ENCODE measurements at regions of chr4 and their contacts with region 1.

Region 1: DNA sequence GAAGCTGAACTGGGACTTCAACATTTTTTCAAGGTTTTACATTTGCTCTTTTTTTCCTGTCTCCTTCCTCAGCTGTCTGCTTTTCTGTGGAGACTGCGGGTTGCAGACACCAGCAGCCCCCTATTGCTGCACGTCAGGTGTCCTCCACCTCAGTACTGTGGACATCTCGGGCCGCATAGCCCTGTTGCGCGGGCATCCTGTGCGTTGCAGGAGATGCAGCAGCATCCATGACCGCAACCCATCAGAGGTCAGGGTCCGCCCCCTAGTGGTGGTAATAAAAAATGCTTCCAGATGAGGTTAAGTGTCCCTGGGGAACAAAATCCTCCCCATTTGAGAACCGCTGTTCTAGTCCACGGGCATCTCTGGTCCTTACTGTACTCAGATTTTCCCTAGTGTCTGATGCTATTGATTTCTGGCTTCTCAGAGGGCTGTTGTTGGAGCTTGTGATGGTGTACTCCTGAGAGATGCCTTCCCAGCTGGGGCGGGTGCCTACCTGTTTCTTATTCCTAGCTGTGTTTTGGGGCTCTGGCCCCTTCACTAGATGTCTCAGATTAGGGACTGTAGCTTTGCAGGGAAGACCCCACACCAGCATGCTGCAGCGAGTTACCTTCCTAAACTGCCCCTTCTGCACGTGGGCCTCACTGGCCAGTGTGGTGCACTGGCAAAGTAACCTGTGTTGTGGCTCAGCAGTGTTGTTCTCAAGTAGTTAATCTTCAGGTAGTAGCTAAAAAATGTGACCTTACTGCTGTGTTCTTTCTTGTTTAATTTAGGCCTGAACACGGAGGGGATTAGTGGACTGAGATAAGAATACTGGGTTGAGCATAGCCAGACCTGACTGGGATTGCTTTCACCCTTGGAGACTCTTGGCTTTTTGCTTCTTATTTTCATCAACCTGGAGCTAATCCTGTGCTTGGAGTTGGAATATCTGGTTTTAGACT is 28.2 kb downstream of the NSD2 start:
- DNase-seq: peak; percentile 44
- ATAC-seq: peak; percentile 95
- H3K4me3 Mint-ChIP-seq: no peak overlapping the region
- H3K27ac Mint-ChIP-seq: no peak overlapping the region
- H3K4me1 Mint-ChIP-seq: peaks cover 6% of the 10 kb centered on the region
- H3K27me3 Mint-ChIP-seq: no peaks in the 10 kb centered on the region
- CTCF ChIP-seq: peak; percentile 67

Region 2: GRCh38 chr4:1579901-1580691 is 319.3 kb before region 1 on chr4:
- CTCF ChIA-PET with region 1: no interaction called
- POLR2A ChIA-PET with region 1: no interaction called
- intact Hi-C with region 1: no loop called
- DNase-seq: peak; percentile 89
- ATAC-seq: peak; percentile 83
- H3K4me3 Mint-ChIP-seq: peak overlapping the region; percentile 81
- H3K27ac Mint-ChIP-seq: peak overlapping the region; percentile 79
- H3K4me1 Mint-ChIP-seq: peaks cover 4% of the 10 kb centered on the region
- H3K27me3 Mint-ChIP-seq: no peaks in the 10 kb centered on the region
- CTCF ChIP-seq: no peak

Region 3: GRCh38 chr4:1746265-1746691 is 153.1 kb before region 1 on chr4:
- CTCF ChIA-PET with region 1: interaction called, 87 read pairs
- POLR2A ChIA-PET with region 1: no interaction called
- intact Hi-C with region 1: loop called (anchors 1 kb)
- DNase-seq: peak; percentile 84
- ATAC-seq: peak; percentile 95
- H3K4me3 Mint-ChIP-seq: no peak overlapping the region
- H3K27ac Mint-ChIP-seq: no peak overlapping the region
- H3K4me1 Mint-ChIP-seq: no peaks in the 10 kb centered on the region
- H3K27me3 Mint-ChIP-seq: no peaks in the 10 kb centered on the region
- CTCF ChIP-seq: peak; percentile 71

Region 4: DNA sequence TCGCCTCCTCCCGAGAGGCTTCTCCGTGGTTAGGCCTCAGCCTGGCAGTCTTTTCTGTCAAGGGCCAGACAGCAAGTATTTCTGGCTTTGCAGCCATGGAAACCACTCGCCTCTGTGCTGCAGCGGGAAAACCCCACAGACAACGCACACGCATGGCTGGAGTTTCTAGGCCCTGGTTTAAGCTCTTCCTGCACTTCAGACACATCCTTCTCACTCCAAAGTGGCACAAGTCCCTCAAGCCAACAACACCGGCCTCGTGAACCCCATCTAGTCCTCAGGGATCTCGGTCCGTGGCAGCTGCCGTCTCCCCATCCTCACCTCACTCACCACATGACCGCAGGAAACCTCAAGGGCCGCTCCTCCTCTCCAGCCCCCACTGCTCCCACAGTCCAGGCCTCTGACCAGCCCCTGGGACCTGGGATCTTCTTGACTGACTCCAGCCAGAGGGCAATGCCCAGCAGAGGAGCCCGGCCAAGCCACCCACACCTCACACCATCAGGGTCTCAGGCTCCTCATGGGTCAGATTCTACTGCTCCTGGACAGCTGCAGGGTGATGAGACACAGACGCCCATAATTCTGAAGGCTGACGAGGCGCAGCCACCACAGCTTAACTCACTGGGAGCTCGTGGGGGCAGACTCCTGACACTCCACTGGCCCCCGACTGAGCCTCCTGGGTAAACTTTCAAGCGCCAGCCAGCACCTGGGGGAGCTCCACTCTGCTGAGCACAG is 65.2 kb before region 1 on chr4:
- CTCF ChIA-PET with region 1: interaction called, 4 read pairs
- POLR2A ChIA-PET with region 1: no interaction called
- intact Hi-C with region 1: loop called (anchors 1 kb)
- DNase-seq: peak; percentile 54
- ATAC-seq: peak; percentile 90
- H3K4me3 Mint-ChIP-seq: peak overlapping the region; percentile 63
- H3K27ac Mint-ChIP-seq: peak overlapping the region; percentile 92
- H3K4me1 Mint-ChIP-seq: peaks cover 34% of the 10 kb centered on the region
- H3K27me3 Mint-ChIP-seq: no peaks in the 10 kb centered on the region
- CTCF ChIP-seq: no peak

Measured in activated B cell treated with CpG ODN at 0.5 μM for 24 hours (primary cell).